Activated CD4-positive, alpha-beta memory T cell treated with anti-CD3 and anti-CD28 coated beads for 36 hours (primary cell): ENCODE measurements at regions of chr13 and their contacts with region 1.

Region 1: DNA sequence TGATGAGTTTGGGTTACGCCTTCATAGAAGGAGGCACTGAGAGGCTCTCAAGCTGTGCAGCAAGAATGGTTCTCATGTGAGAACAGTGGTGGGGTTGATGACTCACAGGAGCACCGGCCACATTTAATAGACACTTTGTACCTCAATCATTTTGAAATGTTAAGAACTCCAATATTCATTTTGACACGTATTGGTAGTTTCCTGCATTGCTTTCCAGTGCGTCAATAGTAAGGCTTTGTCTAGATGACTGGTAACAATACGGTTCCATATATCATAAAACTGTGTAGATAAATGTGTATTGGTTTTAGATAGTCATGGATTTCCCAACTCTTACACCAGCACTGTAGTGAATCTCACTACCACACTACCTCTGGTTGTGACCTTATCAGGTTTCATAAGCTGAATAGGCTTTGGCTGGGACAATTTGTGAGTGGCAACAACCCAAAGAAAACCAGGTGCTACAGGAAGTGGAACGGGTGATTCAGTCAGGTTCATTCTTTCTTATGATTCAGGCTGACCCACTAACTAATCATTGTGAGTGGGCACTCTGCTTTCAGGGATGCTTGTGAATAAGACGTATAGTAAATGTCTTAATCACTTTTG is 362.6 kb downstream of the KLF5 start:
- DNase-seq: peak; percentile 47
- H3K4me3 Mint-ChIP-seq: no peak overlapping the region
- H3K27ac Mint-ChIP-seq: no peak overlapping the region
- H3K4me1 Mint-ChIP-seq: peaks cover 8% of the 10 kb centered on the region
- H3K27me3 Mint-ChIP-seq: peaks cover 5% of the 10 kb centered on the region

Region 2: DNA sequence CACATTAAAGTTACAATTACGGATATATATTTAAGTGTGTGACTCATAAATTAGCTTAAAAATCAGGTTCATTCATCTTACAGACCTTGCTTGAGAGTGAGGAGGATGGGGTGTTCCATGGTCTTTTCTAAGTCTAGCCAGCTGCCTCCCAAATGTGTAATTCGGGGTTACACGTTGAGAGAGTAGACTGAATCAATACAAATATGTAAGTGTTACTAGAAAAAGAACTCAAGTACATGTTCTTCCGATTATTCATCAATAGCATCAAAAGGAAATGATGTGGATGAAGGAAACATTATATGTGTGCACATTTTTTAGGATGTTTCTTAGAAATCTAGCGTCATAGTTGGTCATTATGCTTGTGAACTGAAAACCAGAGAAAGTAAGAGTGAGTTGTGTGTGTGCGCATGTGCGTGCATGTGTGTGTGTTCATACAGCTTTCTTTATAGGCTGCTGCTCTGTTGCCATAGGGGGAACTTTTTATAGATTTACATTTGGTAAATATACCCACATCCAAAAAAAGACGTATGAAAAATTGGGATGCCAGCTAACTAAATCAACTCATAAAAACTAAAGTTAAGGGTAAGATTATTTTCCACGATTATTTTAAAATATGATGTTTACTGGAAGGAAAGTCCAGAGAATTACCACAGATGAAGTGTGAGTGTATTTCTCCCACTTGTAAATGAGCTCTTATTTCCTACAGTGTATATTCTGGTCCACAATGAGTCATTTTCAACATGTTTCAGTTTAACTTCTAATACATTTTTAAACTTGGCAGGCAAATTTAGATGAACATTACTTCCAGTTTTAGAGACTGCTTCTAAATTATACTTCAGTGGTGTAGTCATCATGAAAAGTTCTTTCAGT is 557.0 kb before region 1 on chr13:
- CTCF ChIA-PET with region 1: no interaction called
- POLR2A ChIA-PET with region 1: interaction called, 3 read pairs
- intact Hi-C with region 1: loop called (anchors 1 kb)
- DNase-seq: peak; percentile 51
- H3K4me3 Mint-ChIP-seq: peak overlapping the region; percentile 17
- H3K27ac Mint-ChIP-seq: peak overlapping the region; percentile 83
- H3K4me1 Mint-ChIP-seq: peaks cover 20% of the 10 kb centered on the region
- H3K27me3 Mint-ChIP-seq: no peaks in the 10 kb centered on the region

Region 3: DNA sequence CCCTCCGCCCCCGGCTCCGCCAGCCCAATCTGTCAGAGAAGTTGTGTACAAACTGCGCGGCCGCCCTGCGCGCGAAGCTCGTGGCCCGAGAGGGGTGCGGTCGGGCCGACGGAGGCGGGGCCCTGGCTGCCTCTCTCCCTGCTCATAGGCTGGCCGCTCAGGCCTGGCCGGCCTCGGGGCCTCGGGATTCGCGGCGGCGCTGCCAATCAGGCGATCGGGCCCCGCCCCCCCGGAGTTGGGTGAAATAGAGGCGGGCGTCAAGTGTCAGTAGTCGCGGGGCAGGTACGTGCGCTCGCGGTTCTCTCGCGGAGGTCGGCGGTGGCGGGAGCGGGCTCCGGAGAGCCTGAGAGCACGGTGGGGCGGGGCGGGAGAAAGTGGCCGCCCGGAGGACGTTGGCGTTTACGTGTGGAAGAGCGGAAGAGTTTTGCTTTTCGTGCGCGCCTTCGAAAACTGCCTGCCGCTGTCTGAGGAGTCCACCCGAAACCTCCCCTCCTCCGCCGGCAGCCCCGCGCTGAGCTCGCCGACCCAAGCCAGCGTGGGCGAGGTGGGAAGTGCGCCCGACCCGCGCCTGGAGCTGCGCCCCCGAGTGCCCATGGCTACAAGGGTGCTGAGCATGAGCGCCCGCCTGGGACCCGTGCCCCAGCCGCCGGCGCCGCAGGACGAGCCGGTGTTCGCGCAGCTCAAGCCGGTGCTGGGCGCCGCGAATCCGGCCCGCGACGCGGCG is 362.5 kb before region 1 on chr13 and contains the start of gene KLF5:
- CTCF ChIA-PET with region 1: no interaction called
- POLR2A ChIA-PET with region 1: no interaction called
- intact Hi-C with region 1: loop called (anchors 2 kb)
- DNase-seq: peak; percentile 97
- H3K4me3 Mint-ChIP-seq: peak within 1 kb of the TSS; percentile 75
- H3K27ac Mint-ChIP-seq: no peak within 1 kb of the TSS
- H3K4me1 Mint-ChIP-seq: peaks cover 17% of the 10 kb centered on the region
- H3K27me3 Mint-ChIP-seq: peaks cover 16% of the 10 kb centered on the region
- total RNA-seq, gene KLF5: 3.3 to 4.2 TPM

Region 4: DNA sequence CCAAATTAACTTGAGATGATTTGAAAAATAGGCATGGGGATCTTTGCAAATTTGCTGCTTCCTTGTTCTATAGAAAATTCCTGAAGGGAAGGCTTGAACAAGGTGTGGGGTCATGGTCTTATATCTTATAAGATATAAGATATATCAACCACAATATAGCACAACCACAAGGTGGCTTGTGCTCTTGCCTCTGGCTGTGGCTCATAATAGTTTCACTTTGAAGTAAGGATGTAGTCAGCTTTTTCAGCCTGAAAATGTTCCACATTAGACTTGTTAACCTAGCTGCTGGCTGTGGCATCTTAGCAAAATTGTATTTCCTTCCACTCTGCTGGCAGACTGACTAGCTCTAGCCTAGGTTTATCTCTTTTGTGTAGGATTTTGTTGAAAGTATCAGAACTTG is 192.9 kb before region 1 on chr13:
- CTCF ChIA-PET with region 1: no interaction called
- POLR2A ChIA-PET with region 1: no interaction called
- intact Hi-C with region 1: loop called (anchors 5 kb)
- DNase-seq: peak; percentile 16
- H3K4me3 Mint-ChIP-seq: no peak overlapping the region
- H3K27ac Mint-ChIP-seq: no peak overlapping the region
- H3K4me1 Mint-ChIP-seq: peaks cover 38% of the 10 kb centered on the region
- H3K27me3 Mint-ChIP-seq: peaks cover 4% of the 10 kb centered on the region

Region 5: DNA sequence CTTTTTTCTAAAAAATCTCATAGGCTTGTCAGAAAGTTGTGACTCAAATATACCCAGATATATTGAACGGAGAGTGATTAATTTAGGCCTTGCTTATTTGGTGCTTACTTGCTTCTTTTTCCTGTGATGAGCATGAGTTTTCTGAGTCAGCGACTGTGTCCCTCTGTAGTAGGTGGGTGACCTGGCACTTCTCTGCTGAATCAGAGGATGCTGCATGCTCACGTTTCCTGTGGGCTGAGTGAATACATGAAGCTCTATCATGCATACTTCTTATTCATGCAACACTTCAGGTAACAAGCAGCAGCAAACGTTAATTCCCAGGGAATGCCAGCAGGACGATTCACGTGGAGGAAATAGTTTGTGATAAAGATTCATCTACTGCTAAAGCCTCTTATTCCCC is 117.6 kb before region 1 on chr13:
- CTCF ChIA-PET with region 1: no interaction called
- POLR2A ChIA-PET with region 1: no interaction called
- intact Hi-C with region 1: loop called (anchors 1 kb)
- DNase-seq: peak; percentile 75
- H3K4me3 Mint-ChIP-seq: no peak overlapping the region
- H3K27ac Mint-ChIP-seq: no peak overlapping the region
- H3K4me1 Mint-ChIP-seq: peaks cover 13% of the 10 kb centered on the region
- H3K27me3 Mint-ChIP-seq: peaks cover 2% of the 10 kb centered on the region

Region 6: DNA sequence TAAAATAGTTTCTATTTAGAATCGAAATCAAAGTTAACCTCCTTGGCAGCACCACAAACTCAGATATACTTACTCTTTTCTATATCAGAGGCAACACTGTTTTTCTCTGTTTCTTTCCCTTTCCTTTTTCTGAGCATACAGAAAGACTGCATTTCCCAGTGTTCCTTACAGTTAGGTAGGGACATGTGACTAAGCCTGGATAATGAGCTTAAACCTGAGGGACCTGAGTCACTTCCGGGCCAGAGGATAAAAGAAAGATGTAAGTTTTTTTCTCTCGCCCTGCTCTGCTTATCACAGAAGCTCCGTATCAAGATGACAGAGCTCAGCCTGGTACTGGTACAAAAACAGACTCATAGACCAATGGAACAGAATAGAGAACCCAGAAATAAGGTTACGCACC is 180.9 kb after region 1 on chr13:
- CTCF ChIA-PET with region 1: no interaction called
- POLR2A ChIA-PET with region 1: no interaction called
- intact Hi-C with region 1: no loop called
- DNase-seq: no peak
- H3K4me3 Mint-ChIP-seq: no peak overlapping the region
- H3K27ac Mint-ChIP-seq: no peak overlapping the region
- H3K4me1 Mint-ChIP-seq: no peaks in the 10 kb centered on the region
- H3K27me3 Mint-ChIP-seq: no peaks in the 10 kb centered on the region

Region 7: GRCh38 chr13:73702419-73703071 is 281.1 kb after region 1 on chr13:
- CTCF ChIA-PET with region 1: no interaction called
- POLR2A ChIA-PET with region 1: interaction called, 9 read pairs
- intact Hi-C with region 1: loop called (anchors 1 kb)
- DNase-seq: peak; percentile 56
- H3K4me3 Mint-ChIP-seq: peak overlapping the region; percentile 59
- H3K27ac Mint-ChIP-seq: peak overlapping the region; percentile 29
- H3K4me1 Mint-ChIP-seq: peaks cover 39% of the 10 kb centered on the region
- H3K27me3 Mint-ChIP-seq: no peaks in the 10 kb centered on the region

Region 8: DNA sequence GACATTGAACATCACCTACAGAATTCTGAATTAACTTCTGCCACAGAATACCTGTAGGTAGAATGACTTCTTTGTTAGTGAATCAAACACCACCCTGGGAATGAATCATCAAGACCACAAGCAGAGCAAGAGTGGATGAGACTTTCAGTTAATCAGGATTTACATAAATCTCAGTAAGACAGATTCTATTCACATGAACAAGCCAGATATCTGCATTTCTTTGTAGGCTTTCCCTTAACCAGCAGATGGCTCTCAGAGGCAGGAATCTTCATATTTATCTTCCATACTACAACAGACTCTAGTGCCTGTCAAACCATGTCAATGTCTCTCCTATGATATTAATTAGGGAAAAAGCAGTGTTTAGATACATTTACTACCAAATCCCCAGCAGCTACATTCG is 300.7 kb after region 1 on chr13:
- CTCF ChIA-PET with region 1: no interaction called
- POLR2A ChIA-PET with region 1: no interaction called
- intact Hi-C with region 1: loop called (anchors 1 kb)
- DNase-seq: no peak
- H3K4me3 Mint-ChIP-seq: no peak overlapping the region
- H3K27ac Mint-ChIP-seq: no peak overlapping the region
- H3K4me1 Mint-ChIP-seq: peaks cover 37% of the 10 kb centered on the region
- H3K27me3 Mint-ChIP-seq: no peaks in the 10 kb centered on the region

Region 9: GRCh38 chr13:74930402-74931165 is 1509.2 kb after region 1 on chr13:
- CTCF ChIA-PET with region 1: no interaction called
- POLR2A ChIA-PET with region 1: no interaction called
- intact Hi-C with region 1: no loop called
- DNase-seq: no peak
- H3K4me3 Mint-ChIP-seq: no peak overlapping the region
- H3K27ac Mint-ChIP-seq: no peak overlapping the region
- H3K4me1 Mint-ChIP-seq: no peaks in the 10 kb centered on the region
- H3K27me3 Mint-ChIP-seq: peaks cover 5% of the 10 kb centered on the region